ENCODE measurements at regions of chr4 and their contacts with region 1.

Region 1: DNA sequence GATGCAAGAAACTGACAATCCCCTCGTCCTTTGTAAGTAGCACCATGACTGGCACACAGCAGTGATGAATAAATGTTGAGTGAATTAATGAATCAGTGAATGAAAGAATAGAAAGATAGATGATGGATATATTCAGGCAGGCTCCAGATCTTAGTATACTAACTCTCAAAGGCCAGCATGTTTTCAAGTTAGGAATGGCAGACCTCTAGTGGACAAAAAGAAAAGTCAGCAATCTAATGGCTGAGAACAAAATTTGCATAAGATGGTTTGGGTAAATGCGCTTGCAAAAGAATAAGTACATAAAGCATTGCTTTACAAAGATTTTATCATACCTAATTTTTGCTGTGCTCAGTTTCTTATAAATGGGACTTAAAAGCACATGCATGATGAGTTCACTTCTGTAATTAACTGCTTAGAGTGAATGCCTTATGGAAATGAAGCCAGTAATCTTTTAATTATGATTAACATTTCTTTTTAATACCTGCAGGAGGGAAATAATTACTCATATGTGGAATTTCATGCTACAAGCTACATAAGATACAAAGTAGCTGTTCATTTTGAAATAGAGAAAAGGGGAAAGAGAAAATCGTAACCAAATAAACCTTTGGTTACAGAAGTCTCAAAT is 126.9 kb upstream of the GPRIN3 start:
- DNase-seq: peak; percentile 71
- H3K4me3 Mint-ChIP-seq: no peak overlapping the region
- H3K27ac Mint-ChIP-seq: no peak overlapping the region
- H3K4me1 Mint-ChIP-seq: peaks cover 22% of the 10 kb centered on the region
- H3K27me3 Mint-ChIP-seq: peaks cover 3% of the 10 kb centered on the region

Region 2: GRCh38 chr4:89110986-89111832 is 323.3 kb before region 1 on chr4 and contains the start of gene TIGD2:
- intact Hi-C with region 1: no loop called
- DNase-seq: peak; percentile 95
- H3K4me3 Mint-ChIP-seq: peak within 1 kb of the TSS; percentile 83
- H3K27ac Mint-ChIP-seq: peak within 1 kb of the TSS; percentile 76
- H3K4me1 Mint-ChIP-seq: peaks cover 22% of the 10 kb centered on the region
- H3K27me3 Mint-ChIP-seq: peaks cover 32% of the 10 kb centered on the region
- total RNA-seq, gene TIGD2: 2.6 and 3.5 TPM in 2 replicates

Region 3: DNA sequence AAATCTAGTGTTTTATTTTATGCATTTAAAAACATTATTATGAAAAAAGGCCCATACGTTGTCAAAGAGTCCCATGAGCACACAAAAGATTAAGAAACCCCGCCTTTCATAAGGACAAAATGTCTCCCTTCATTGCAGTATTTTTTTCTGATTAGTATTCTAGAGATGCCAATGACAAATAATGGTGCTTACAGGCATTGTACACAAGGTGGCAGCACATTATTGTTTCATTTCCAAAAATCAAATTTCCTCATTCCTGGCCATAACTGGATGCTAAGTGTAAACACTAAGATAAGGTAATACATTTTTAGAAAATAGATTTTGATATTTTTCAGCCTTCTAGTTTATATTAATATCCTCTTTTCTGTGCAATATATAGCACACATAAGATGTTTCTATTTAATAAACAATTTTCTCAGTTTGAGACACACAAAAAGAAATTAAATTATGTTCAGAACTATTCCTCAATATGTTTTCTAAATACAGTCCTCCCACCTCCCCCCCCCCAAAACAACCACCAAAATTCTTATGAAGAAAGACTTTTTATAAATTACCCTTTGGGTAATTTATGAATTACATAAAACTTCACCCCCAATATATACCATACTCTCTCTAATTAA is 275.5 kb before region 1 on chr4:
- intact Hi-C with region 1: loop called (anchors 2 kb)
- DNase-seq: no peak
- H3K4me3 Mint-ChIP-seq: no peak overlapping the region
- H3K27ac Mint-ChIP-seq: no peak overlapping the region
- H3K4me1 Mint-ChIP-seq: no peaks in the 10 kb centered on the region
- H3K27me3 Mint-ChIP-seq: peaks cover 24% of the 10 kb centered on the region

Region 4: GRCh38 chr4:89254847-89255246 is 179.6 kb before region 1 on chr4:
- intact Hi-C with region 1: loop called (anchors 10 kb)
- DNase-seq: peak; percentile 80
- H3K4me3 Mint-ChIP-seq: no peak overlapping the region
- H3K27ac Mint-ChIP-seq: peak overlapping the region; percentile 18
- H3K4me1 Mint-ChIP-seq: peaks cover 64% of the 10 kb centered on the region
- H3K27me3 Mint-ChIP-seq: no peaks in the 10 kb centered on the region

Region 5: DNA sequence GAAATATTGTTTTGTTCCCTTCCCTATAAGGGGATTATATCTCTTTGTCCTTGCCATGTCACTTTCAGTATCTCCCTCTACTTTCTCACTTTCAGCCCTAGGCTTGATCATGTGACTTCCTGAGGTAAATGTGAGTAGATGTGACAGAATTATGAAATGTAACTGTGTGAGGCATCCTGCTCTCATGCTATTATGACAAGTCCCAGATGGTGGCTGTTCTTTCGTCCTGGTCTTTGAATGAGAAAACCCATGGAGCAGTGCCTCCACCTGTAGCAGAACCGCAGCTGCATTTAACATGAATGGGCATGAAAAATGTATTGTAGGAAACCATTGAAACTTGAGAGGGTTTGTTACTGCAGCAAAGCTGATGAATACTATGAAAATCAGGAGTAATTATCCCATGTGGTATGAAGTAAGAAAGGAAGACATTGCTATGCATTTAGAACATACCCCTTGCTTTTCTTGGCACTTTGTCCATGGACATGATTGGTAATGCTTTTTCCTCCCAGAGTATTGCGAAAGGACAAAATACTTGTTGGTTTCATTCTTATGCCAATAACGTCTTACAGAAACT is 75.3 kb after region 1 on chr4:
- intact Hi-C with region 1: loop called (anchors 2 kb)
- DNase-seq: peak; percentile 80
- H3K4me3 Mint-ChIP-seq: no peak overlapping the region
- H3K27ac Mint-ChIP-seq: no peak overlapping the region
- H3K4me1 Mint-ChIP-seq: peaks cover 15% of the 10 kb centered on the region
- H3K27me3 Mint-ChIP-seq: peaks cover 38% of the 10 kb centered on the region

Region 6: GRCh38 chr4:89823416-89823815 is 388.9 kb after region 1 on chr4:
- intact Hi-C with region 1: no loop called
- DNase-seq: no peak
- H3K4me3 Mint-ChIP-seq: no peak overlapping the region
- H3K27ac Mint-ChIP-seq: no peak overlapping the region
- H3K4me1 Mint-ChIP-seq: no peaks in the 10 kb centered on the region
- H3K27me3 Mint-ChIP-seq: peaks cover 12% of the 10 kb centered on the region

Region 7: DNA sequence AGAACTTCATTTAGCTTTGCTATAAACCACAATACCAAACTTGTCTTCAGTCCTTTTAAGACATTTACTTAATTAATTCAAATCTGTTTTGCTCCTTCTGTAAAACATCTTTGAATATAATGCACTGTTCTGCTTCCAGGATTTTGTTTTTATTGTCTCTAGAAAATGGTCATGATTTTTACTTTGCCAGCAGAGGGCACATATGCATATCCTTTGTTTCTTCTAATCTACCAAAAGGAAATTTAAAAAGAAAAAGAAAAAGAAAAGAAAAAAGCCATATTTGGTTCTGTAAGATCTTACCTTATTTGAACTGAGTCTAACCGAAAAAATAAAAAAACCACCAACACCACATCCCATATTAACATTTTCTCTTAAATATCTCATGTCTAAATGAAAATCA is 590.8 kb after region 1 on chr4:
- intact Hi-C with region 1: no loop called
- DNase-seq: no peak
- H3K4me3 Mint-ChIP-seq: no peak overlapping the region
- H3K27ac Mint-ChIP-seq: no peak overlapping the region
- H3K4me1 Mint-ChIP-seq: no peaks in the 10 kb centered on the region
- H3K27me3 Mint-ChIP-seq: no peaks in the 10 kb centered on the region

Measured in activated CD4-positive, alpha-beta T cell treated with anti-CD3 and anti-CD28 coated beads, Interleukin-2, amount 10 ng/mL, durations not matched to agents 24 days and 14 days (primary cell).